ENCODE measurements at regions of chr10 and their contacts with region 1.

Region 1: GRCh38 chr10:70584909-70585544 is 17.5 kb downstream of the PRF1 start:
- DNase-seq: no peak
- H3K4me3 ChIP-seq: no peak overlapping the region
- H3K27ac ChIP-seq: no peak overlapping the region
- H3K4me1 ChIP-seq: no peaks in the 10 kb centered on the region
- H3K27me3 ChIP-seq: no peaks in the 10 kb centered on the region
- CTCF ChIP-seq: no peak
- POLR2A ChIP-seq: no peak

Region 2: GRCh38 chr10:69960988-69961880 is 623.8 kb before region 1 on chr10:
- intact Hi-C with region 1: loop called (anchors 10 kb)
- DNase-seq: no peak
- H3K4me3 ChIP-seq: no peak overlapping the region
- H3K27ac ChIP-seq: no peak overlapping the region
- H3K4me1 ChIP-seq: no peaks in the 10 kb centered on the region
- H3K27me3 ChIP-seq: no peaks in the 10 kb centered on the region
- CTCF ChIP-seq: no peak
- POLR2A ChIP-seq: no peak

Measured in breast epithelium (tissue), 4 donors.